Mammary epithelial cell (primary cell): ENCODE measurements at regions of chr9 and their contacts with region 1.

Region 1: DNA sequence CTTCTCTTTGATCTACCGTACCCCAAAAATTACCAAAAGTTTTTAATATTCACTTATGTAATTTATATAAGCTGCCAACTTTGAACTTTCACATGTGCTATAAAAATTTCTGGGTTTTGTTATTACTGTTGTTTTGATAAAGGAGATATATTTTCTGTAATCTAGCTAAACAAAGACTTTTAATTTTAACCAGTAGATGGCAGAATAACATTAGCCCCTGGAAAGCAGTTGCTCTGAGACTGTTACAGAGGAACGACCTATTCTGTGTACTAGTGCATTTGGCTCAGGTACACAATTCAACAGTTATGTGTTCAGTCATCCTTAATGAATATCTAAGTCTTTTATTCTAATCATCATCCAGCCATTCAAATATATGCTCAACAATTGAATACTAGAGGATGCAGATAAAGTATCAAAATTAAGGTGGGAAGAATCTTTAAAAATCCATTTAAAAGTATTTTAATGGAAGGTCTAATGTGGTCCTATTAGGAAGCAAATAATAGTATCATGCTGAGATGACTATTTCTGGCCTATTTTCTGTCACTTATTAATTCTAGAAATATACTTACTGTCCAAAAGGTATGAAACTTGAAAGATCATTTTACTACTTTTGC is 8.6 kb downstream of the KLHL9 start:
- DNase-seq: peak; percentile 27
- H3K4me3 ChIP-seq: no peak overlapping the region
- H3K27ac ChIP-seq: no peak overlapping the region
- H3K4me1 ChIP-seq: peaks cover 11% of the 10 kb centered on the region
- H3K27me3 ChIP-seq: no peaks in the 10 kb centered on the region
- CTCF ChIP-seq: peak; percentile 53 to 66

Region 2: GRCh38 chr9:21252721-21253547 is 73.7 kb before region 1 on chr9:
- CTCF ChIA-PET with region 1: interaction called, 10 read pairs
- dilution Hi-C with region 1: no loop called
- in situ Hi-C with region 1: no loop called
- intact Hi-C with region 1: no loop called
- DNase-seq: peak; percentile 41
- H3K4me3 ChIP-seq: peak overlapping the region in 1 of 3 experiments; percentile 6
- H3K27ac ChIP-seq: no peak overlapping the region
- H3K4me1 ChIP-seq: no peaks in the 10 kb centered on the region
- H3K27me3 ChIP-seq: peaks cover 7% of the 10 kb centered on the region
- CTCF ChIP-seq: peak; percentile 50 to 65

Region 3: GRCh38 chr9:21395778-21396717 is 69.4 kb after region 1 on chr9:
- CTCF ChIA-PET with region 1: interaction called, 9 read pairs
- dilution Hi-C with region 1: loop called (anchors 5 kb)
- in situ Hi-C with region 1: no loop called
- intact Hi-C with region 1: loop called (anchors 1 kb)
- DNase-seq: no peak
- H3K4me3 ChIP-seq: peak overlapping the region; percentile 51 to 58 (median 51)
- H3K27ac ChIP-seq: no peak overlapping the region
- H3K4me1 ChIP-seq: peaks cover 6% of the 10 kb centered on the region
- H3K27me3 ChIP-seq: peaks cover 11% of the 10 kb centered on the region
- CTCF ChIP-seq: peak; percentile 76 to 86

Region 4: GRCh38 chr9:21434202-21435014 is 107.8 kb after region 1 on chr9:
- CTCF ChIA-PET with region 1: interaction called, 3 read pairs
- dilution Hi-C with region 1: no loop called
- in situ Hi-C with region 1: no loop called
- intact Hi-C with region 1: loop called (anchors 5 kb)
- DNase-seq: peak; percentile 40
- H3K4me3 ChIP-seq: no peak overlapping the region
- H3K27ac ChIP-seq: no peak overlapping the region
- H3K4me1 ChIP-seq: no peaks in the 10 kb centered on the region
- H3K27me3 ChIP-seq: peaks cover 3% of the 10 kb centered on the region
- CTCF ChIP-seq: peak; percentile 71 to 72

Region 5: DNA sequence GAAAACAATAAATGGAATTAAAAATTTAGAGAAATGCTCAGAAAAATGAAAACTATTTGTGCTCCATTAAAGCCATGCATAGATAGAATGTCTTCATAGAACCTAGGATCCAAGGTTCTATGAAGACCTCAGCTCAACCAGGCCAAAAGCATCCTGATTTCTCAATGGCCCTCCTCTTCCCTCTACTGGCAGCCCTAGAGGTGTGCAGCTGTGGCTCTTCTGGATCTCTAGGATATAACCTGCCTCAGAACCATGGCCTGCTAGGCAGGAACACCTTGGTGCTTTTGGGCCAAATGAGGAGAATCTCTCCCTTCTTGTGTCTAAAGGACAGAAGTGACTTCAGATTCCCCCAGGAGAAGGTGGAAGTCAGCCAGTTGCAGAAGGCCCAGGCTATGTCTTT is 128.7 kb after region 1 on chr9:
- CTCF ChIA-PET with region 1: no interaction called
- dilution Hi-C with region 1: no loop called
- in situ Hi-C with region 1: no loop called
- intact Hi-C with region 1: loop called (anchors 1 kb)
- DNase-seq: peak; percentile 19
- H3K4me3 ChIP-seq: no peak overlapping the region
- H3K27ac ChIP-seq: no peak overlapping the region
- H3K4me1 ChIP-seq: peaks cover 16% of the 10 kb centered on the region
- H3K27me3 ChIP-seq: no peaks in the 10 kb centered on the region
- CTCF ChIP-seq: peak; percentile 67 to 74

Region 6: GRCh38 chr9:21549251-21549765 is 222.7 kb after region 1 on chr9:
- CTCF ChIA-PET with region 1: no interaction called
- dilution Hi-C with region 1: no loop called
- in situ Hi-C with region 1: no loop called
- intact Hi-C with region 1: loop called (anchors 10 kb)
- DNase-seq: peak; percentile 83
- H3K4me3 ChIP-seq: peak overlapping the region; percentile 18 to 90 (median 30)
- H3K27ac ChIP-seq: peak overlapping the region; percentile 99
- H3K4me1 ChIP-seq: peaks cover 69% of the 10 kb centered on the region
- H3K27me3 ChIP-seq: no peaks in the 10 kb centered on the region
- CTCF ChIP-seq: no peak

Region 7: GRCh38 chr9:21802195-21803000 is 475.8 kb after region 1 on chr9 and contains the start of gene MTAP:
- CTCF ChIA-PET with region 1: no interaction called
- dilution Hi-C with region 1: no loop called
- in situ Hi-C with region 1: loop called in 1 of 2 experiments (anchors 10 kb)
- intact Hi-C with region 1: loop called (anchors 5 kb)
- DNase-seq: peak; percentile 89
- H3K4me3 ChIP-seq: peak within 1 kb of the TSS; percentile 67 to 71 (median 68)
- H3K27ac ChIP-seq: peak within 1 kb of the TSS; percentile 86
- H3K4me1 ChIP-seq: peaks cover 31% of the 10 kb centered on the region
- H3K27me3 ChIP-seq: no peaks in the 10 kb centered on the region
- CTCF ChIP-seq: no peak
- total RNA-seq, gene MTAP: 51.5 to 96.9 TPM